ENCODE measurements at regions of chr9 and their contacts with region 1.

Region 1: GRCh38 chr9:136410500-136411287 is at the starts of genes ENTR1 and PMPCA:
- DNase-seq: peak; percentile 87
- H3K4me3 ChIP-seq: peak within 1 kb of the TSS; percentile 42 to 78 (median 63)
- H3K27ac ChIP-seq: peak within 1 kb of the TSS; percentile 57
- H3K4me1 ChIP-seq: peaks cover 20% of the 10 kb centered on the region
- H3K27me3 ChIP-seq: no peaks in the 10 kb centered on the region
- CTCF ChIP-seq: no peak
- POLR2A ChIP-seq: peak; percentile 91
- total RNA-seq, gene ENTR1: 47.3 and 61.6 TPM in 2 replicates
- total RNA-seq, gene PMPCA: 75.3 and 77.2 TPM in 2 replicates

Region 2: DNA sequence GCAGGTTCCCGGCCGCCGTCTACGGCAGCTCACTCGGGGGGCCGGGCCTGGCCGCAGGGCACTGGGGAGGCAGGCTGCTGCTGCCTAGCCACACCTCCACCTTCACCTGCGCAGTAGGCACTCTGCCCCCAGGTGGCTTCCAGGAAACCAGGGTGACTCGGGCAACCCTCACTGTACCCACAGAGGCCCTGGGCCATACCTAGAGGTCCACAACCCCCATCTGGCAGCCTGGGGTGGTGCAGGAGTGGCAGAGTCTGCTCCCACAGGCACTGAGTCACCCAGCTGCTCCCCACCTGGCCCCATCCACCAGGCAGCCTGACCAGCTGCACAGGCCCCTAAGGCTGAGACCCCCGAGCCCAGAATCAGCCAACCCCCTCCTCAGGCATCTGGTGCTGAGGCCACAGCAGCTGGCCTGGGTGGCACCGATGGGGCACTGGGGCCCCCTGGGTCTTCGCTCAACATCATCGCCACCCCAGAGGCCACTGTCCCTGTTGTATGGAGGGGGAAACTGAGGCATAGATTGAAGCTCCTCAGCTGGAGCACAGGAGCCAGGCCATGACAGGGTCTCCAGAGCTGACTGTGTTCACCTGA is 638.5 kb before region 1 on chr9:
- CTCF ChIA-PET with region 1: no interaction called
- POLR2A ChIA-PET with region 1: no interaction called
- dilution Hi-C with region 1: no loop called
- intact Hi-C with region 1: no loop called
- DNase-seq: no peak
- H3K4me3 ChIP-seq: no peak overlapping the region
- H3K27ac ChIP-seq: no peak overlapping the region
- H3K4me1 ChIP-seq: no peaks in the 10 kb centered on the region
- H3K27me3 ChIP-seq: no peaks in the 10 kb centered on the region
- CTCF ChIP-seq: no peak
- POLR2A ChIP-seq: no peak

Region 3: DNA sequence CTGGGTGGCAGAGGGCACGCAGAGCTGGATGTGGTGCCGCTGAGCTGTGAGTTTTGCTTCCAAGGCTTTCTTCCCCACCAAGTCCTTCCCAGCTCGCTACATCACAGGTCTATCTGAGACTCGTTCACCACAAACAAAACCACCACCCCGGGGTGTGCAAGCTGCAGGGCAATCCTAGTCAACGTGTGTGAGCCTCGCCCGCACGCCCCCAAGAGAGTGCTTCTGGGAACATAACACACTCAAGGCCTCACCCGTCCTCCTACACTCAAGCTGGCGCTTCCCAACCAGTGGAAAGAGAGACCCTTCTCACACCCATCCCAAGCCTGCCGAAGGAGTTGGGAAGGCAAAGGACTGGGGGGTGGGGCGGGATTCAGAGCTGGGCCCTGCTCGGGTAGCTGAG is 21.3 kb before region 1 on chr9:
- CTCF ChIA-PET with region 1: no interaction called
- POLR2A ChIA-PET with region 1: no interaction called
- dilution Hi-C with region 1: no loop called
- intact Hi-C with region 1: no loop called
- DNase-seq: no peak
- H3K4me3 ChIP-seq: no peak overlapping the region
- H3K27ac ChIP-seq: no peak overlapping the region
- H3K4me1 ChIP-seq: no peaks in the 10 kb centered on the region
- H3K27me3 ChIP-seq: no peaks in the 10 kb centered on the region
- CTCF ChIP-seq: no peak
- POLR2A ChIP-seq: no peak

Region 4: DNA sequence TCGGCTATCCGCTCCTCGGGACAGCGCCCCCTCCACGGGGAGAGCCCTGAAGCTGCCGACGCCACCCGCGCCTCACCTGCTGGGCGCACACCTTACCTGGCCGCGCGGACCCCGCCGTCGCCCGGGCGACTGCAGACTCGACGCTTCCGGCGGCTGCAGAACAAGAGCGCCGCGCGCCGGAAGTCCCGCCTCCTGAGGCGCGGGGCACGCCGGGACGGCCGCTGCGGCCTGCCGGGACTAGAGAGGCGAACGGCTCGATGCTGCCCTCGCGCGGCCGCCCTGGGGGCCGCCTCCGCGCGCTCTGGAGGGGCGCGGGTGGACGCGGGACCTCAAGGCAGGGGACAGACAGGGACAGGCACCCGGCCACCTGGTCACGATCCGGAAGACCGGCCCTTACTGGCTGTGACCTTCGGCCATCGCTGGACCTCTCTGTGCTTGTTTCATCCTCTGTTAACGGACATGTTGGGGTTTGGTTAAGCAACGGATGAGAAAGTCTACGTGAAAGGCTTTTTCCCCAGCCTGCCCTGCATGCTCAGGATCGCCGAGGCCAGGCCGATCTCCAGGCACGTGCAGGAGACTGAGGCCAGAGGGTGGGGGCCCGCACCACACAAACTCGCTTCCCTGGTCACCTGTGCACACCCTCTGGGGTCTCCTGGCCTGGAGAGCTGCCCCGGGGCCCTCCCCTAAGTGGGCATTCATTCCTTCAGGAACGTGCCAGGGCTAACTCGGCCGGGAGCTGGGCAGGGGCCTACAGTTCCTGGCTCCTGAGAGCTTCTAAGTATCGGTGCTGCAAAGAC is 10.5 kb before region 1 on chr9 and contains the start of gene SNAPC4:
- CTCF ChIA-PET with region 1: interaction called, 12 read pairs
- POLR2A ChIA-PET with region 1: no interaction called
- dilution Hi-C with region 1: no loop called
- intact Hi-C with region 1: loop called (anchors 1 kb)
- DNase-seq: peak; percentile 82
- H3K4me3 ChIP-seq: peak within 1 kb of the TSS; percentile 55 to 96 (median 62)
- H3K27ac ChIP-seq: peak within 1 kb of the TSS; percentile 27
- H3K4me1 ChIP-seq: peaks cover 10% of the 10 kb centered on the region
- H3K27me3 ChIP-seq: no peaks in the 10 kb centered on the region
- CTCF ChIP-seq: peak; percentile 88 to 97
- POLR2A ChIP-seq: peak; percentile 90
- total RNA-seq, gene SNAPC4: 14.7 and 17.5 TPM in 2 replicates

Region 5: GRCh38 chr9:136439550-136440408 is 29.1 kb after region 1 on chr9 and contains the start of gene INPP5E:
- CTCF ChIA-PET with region 1: interaction called, 3 read pairs
- POLR2A ChIA-PET with region 1: no interaction called
- dilution Hi-C with region 1: no loop called
- intact Hi-C with region 1: loop called (anchors 2 kb)
- DNase-seq: peak; percentile 51
- H3K4me3 ChIP-seq: peak within 1 kb of the TSS; percentile 33 to 76 (median 66)
- H3K27ac ChIP-seq: no peak within 1 kb of the TSS
- H3K4me1 ChIP-seq: peaks cover 12% of the 10 kb centered on the region
- H3K27me3 ChIP-seq: no peaks in the 10 kb centered on the region
- CTCF ChIP-seq: peak; percentile 59 to 63
- POLR2A ChIP-seq: peak; percentile 71
- total RNA-seq, gene INPP5E: 22.9 and 24.5 TPM in 2 replicates

Measured in endothelial cell of umbilical vein (primary cell).